CD14-positive monocyte (primary cell): ENCODE measurements at regions of chr9 and their contacts with region 1.

Region 1: GRCh38 chr9:72305102-72305546 is 59.9 kb downstream of the ZFAND5 start:
- DNase-seq: peak; percentile 98 to 99 (median 99)
- H3K4me3 ChIP-seq: peak overlapping the region; percentile 56 to 99 (median 82)
- H3K4me3 Mint-ChIP-seq: peak overlapping the region; percentile 73 to 91
- H3K27ac ChIP-seq: peak overlapping the region; percentile 87 to 92
- H3K27ac Mint-ChIP-seq: peak overlapping the region; percentile 97 to 99 (median 97)
- H3K4me1 ChIP-seq: peaks cover 60 to 73% of the 10 kb centered on the region in 2 donors
- H3K4me1 Mint-ChIP-seq: peaks cover 70% of the 10 kb centered on the region
- H3K27me3 ChIP-seq: no peaks in the 10 kb centered on the region
- H3K27me3 Mint-ChIP-seq: no peaks in the 10 kb centered on the region
- CTCF ChIP-seq: no peak

Region 2: DNA sequence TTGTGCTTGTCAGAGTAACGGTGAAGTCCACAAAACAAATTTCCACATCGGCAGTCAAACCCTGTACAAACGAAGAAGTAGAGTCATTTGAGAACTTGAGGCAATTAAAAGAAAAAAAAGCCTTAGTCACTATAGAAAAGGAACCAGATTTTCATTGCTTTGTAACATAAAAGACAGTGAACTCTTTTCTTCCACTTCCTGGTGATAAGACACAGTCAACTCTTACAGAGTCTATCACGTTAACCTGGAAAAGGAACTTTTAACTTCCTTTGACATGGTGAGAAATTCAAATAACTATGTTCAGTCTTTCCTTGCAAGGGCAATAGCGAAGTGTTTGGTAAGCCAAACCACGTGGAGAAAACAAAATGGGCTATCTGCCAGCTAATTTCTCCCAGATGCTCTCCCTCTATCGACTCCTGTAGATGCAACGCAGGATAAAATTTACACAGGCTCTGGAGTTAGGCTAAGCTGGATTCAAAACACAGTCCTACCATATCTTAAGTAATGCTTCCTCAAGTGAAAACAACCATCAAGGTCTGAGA is 51.0 kb after region 1 on chr9:
- intact Hi-C with region 1: loop called (anchors 5 kb)
- DNase-seq: peak; percentile 52 to 86 (median 81)
- H3K4me3 ChIP-seq: peak overlapping the region in 1 of 3 experiments; percentile 100
- H3K4me3 Mint-ChIP-seq: peak overlapping the region in 1 of 2 donors; percentile 78
- H3K27ac ChIP-seq: peak overlapping the region in 1 of 2 donors; percentile 82
- H3K27ac Mint-ChIP-seq: peak overlapping the region; percentile 88 to 96 (median 92)
- H3K4me1 ChIP-seq: peaks cover 60 to 69% of the 10 kb centered on the region in 2 donors
- H3K4me1 Mint-ChIP-seq: peaks cover 70% of the 10 kb centered on the region
- H3K27me3 ChIP-seq: no peaks in the 10 kb centered on the region
- H3K27me3 Mint-ChIP-seq: peaks cover 0 to 4% (median 0%) of the 10 kb centered on the region in 3 donors
- CTCF ChIP-seq: no peak